ENCODE measurements at regions of chr7 and their contacts with region 1.

Region 1: DNA sequence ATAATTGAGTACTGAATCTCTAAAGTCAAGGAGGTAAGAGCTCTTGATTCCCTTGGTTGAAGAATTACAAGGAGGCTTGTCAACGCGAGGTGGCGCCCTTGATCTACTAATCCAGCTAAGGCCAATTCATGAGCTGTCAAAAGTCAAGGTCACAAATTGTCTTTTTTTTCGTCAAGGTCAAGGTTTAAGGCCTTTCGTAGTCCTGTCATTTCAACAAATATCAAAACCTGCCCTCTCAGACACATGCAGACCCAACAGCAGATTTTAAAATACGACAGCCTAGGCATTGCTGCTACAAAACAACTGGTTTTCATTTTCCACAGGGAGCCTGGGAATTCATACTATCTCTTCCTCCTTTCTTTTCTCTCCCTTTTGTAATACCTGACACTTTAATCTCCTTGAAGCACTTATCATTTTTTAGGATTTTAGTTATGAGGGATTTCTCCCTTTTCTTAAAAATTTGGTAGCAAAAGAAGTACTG is 3.6 kb downstream of the HOXA13 start:
- DNase-seq: no peak
- H3K4me3 ChIP-seq: no peak overlapping the region
- CTCF ChIP-seq: peak; percentile 72

Region 2: GRCh38 chr7:27179503-27180430 is 16.6 kb before region 1 on chr7:
- CTCF ChIA-PET with region 1: interaction called, 51 read pairs
- POLR2A ChIA-PET with region 1: no interaction called
- DNase-seq: no peak
- H3K4me3 ChIP-seq: peak overlapping the region; percentile 75
- CTCF ChIP-seq: peak; percentile 97

Region 3: GRCh38 chr7:27210441-27211083 is 14.2 kb after region 1 on chr7:
- CTCF ChIA-PET with region 1: interaction called, 16 read pairs
- POLR2A ChIA-PET with region 1: no interaction called
- DNase-seq: no peak
- H3K4me3 ChIP-seq: peak overlapping the region; percentile 23; the same call in 1 of the 2 replicates
- CTCF ChIP-seq: peak; percentile 77

Region 4: DNA sequence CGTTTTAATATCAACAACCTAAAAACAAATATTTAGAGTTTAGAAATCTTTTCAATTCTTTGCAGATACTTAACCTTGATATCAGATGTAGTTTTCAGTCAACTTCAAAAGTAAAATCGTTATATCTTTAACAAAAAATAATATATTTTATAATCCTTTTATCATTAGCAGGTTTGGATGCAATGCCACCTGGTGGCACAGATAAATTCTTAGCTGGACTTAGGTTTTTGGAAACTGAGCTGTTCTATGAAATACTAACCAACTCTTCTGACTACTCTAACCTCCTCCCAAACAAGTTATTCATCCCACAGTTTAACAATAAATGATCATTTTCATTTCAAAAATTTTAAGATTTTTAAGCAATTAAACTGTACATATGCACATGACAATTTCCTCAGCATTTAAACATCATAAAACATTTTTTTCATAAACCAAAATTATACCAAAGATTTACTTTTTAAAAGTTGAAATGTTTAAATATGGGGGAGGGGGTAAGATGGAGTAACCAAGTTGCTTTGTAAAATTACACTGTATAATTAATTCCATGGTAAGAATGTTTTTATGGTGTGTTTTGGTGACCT is 409.5 kb after region 1 on chr7:
- CTCF ChIA-PET with region 1: interaction called, 34 read pairs
- POLR2A ChIA-PET with region 1: no interaction called
- DNase-seq: no peak
- H3K4me3 ChIP-seq: no peak overlapping the region
- CTCF ChIP-seq: no peak

Region 5: GRCh38 chr7:27774717-27775328 is 578.5 kb after region 1 on chr7:
- CTCF ChIA-PET with region 1: interaction called, 67 read pairs
- POLR2A ChIA-PET with region 1: no interaction called
- DNase-seq: no peak
- H3K4me3 ChIP-seq: no peak overlapping the region
- CTCF ChIP-seq: peak; percentile 58

Region 6: DNA sequence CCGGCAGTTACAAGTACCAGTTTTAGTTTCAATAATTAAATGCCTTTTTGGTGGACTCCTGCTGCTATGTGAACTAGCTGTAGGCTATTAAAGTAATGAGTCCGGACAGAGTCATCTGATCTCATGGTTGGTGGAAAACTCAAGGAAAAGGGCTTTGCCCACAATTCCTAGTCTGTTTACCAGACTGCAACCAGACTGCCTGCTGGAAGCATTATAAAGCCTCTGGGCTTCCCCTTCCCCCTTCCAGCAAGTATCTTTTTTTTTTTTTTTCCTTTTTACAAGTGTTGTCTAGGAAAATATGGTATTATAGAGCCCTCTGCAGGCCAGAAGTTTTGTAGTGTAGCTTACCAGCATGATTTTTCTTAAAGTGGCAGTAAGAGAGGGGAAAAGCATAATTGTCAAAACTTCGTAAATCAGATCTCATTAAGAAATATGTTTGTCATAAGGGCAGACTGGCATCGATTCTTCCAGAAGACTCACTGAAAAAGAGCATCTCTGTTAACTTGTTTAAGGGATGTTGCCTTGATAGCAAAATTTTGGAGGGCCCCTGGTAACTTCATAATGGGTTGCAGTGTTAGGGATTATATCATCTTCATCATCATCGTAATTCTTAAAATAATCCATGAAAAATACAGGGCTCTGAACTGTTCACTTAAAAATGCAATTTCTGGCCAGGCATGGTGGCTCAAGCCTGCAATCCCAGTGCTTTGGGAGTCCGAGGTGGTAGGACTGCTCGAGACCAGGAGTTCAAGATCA is 724.9 kb after region 1 on chr7:
- CTCF ChIA-PET with region 1: interaction called, 25 read pairs
- POLR2A ChIA-PET with region 1: no interaction called
- DNase-seq: peak; percentile 71
- H3K4me3 ChIP-seq: no peak overlapping the region
- CTCF ChIP-seq: peak; percentile 18

Region 7: GRCh38 chr7:28078036-28078901 is 881.9 kb after region 1 on chr7:
- CTCF ChIA-PET with region 1: interaction called, 26 read pairs
- POLR2A ChIA-PET with region 1: no interaction called
- DNase-seq: no peak
- H3K4me3 ChIP-seq: no peak overlapping the region
- CTCF ChIP-seq: peak; percentile 86

Measured in AG04449 (cell line).